Right ventricle myocardium superior (tissue), 1 donor: ENCODE measurements at regions of chr6 and their contacts with region 1.

Region 1: GRCh38 chr6:75512591-75512990 is 19.0 kb upstream of the FILIP1 start:
- DNase-seq: no peak
- ATAC-seq: no peak

Region 2: DNA sequence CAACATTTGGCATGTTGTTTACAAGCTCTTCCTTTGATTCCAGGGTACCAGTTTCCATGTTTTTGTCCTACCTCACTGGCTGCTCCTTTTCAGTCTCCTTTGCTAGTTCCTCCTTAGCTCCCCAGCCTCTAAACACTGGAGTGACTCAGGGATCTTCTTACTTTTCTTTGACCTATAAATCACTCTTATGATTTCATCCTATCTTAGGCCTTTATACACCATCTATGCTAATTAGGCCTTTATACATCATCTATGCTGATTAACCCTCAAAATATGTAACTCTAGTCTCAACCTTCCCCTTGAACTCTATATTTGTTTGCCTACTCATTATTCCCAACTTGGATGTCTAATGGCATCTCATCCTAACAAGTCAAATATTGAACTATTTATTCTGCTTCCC is 237.5 kb before region 1 on chr6:
- intact Hi-C with region 1: loop called (anchors 5 kb)
- DNase-seq: no peak
- ATAC-seq: no peak

Region 3: GRCh38 chr6:75397656-75398465 is 114.7 kb before region 1 on chr6:
- intact Hi-C with region 1: no loop called
- DNase-seq: no peak
- ATAC-seq: no peak